ENCODE measurements at regions of chr1 and their contacts with region 1.

Region 1: DNA sequence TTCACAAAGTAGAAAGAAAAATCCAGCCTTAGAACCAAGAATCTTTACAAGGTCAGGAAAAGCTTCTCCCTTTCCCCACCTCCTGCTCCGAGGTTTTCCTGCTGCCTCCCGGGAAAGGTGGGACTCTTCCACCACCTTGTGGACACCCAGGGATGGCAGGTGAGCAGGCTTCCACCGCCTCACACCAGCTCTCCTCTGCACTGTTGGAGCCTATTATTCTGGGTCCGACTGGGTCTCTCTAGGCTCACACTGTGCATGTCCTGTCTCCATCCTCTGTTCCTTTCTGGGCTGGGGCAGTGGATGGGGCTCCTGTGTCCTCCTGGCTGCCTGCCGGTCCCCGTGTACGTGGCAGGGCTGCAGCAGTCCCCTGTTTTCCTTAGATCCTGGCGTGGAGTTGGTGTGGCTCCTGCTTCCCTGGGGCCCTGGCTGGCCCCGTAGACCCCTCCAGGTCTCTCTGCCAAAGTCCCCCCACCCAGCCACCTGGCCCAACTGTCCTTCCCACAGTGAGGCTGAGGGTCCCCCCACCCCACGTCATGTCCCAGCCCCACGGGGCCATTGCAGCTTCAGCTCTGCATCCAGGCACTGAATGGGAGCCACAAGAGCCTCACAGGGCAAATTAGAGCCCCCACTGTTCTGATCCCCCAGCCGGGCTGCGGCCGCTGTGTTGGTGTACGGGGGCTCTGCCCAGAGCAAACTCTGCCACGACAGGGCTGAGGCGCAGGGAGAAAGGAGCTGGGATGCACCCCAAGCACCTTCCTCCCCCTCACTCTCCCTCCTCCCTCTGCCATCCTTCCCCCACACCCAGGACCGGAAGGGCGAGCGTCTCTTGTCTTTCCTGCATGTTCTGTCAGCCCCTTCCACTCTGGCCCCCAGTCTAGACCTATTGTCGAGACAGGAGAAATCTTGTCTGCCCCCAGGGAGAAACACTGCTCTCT is 3.3 kb upstream of the SLC45A1 start:
- DNase-seq: peak; percentile 53 to 82
- H3K4me3 ChIP-seq: no peak overlapping the region
- H3K27ac ChIP-seq: peak overlapping the region; percentile 29; the same call in 1 of the 2 replicates
- H3K4me1 ChIP-seq: peaks cover 11% of the 10 kb centered on the region
- H3K27me3 ChIP-seq: no peaks in the 10 kb centered on the region
- CTCF ChIP-seq: peak; percentile 83

Region 2: DNA sequence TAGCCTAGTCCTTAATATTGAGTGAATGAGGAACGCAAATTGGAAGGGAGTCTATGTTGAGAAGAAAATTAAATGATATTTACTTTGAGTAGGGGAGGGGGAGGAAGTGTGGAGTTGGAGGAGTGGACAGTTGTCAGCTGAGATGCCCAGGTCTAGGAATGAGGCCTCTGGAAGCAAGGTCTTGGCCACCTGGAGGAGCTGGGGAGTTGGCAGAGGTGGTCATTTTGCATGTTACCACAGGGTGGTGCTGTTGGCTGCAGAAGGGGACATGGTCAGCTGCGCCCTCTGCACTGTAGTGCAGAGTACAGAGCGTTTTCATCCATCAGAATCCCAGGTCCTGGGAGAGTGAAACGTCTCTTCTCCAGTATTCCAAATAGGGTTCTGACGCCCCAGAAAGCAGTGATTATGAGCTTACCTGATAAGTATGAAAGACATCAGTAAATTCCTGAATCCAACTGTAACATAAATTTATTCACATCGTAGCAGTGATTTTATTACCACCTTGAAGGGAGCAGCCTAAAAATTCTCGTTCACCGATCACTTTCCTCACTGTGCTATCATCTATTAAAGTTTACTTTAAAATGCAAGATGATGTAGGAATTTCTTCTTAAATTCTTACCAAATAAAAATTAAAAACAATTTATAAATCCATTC is 339.3 kb before region 1 on chr1:
- CTCF ChIA-PET with region 1: interaction called, 14 read pairs
- POLR2A ChIA-PET with region 1: no interaction called
- intact Hi-C with region 1: loop called (anchors 2 kb)
- DNase-seq: peak; percentile 56 to 84
- H3K4me3 ChIP-seq: no peak overlapping the region
- H3K27ac ChIP-seq: no peak overlapping the region
- H3K4me1 ChIP-seq: no peaks in the 10 kb centered on the region; the same call in 1 of the 2 replicates
- H3K27me3 ChIP-seq: no peaks in the 10 kb centered on the region
- CTCF ChIP-seq: peak; percentile 84

Region 3: GRCh38 chr1:8026153-8026975 is 288.2 kb before region 1 on chr1 and contains the start of gene ERRFI1:
- CTCF ChIA-PET with region 1: interaction called, 4 read pairs
- POLR2A ChIA-PET with region 1: interaction called, 4 read pairs
- intact Hi-C with region 1: loop called (anchors 1 kb)
- DNase-seq: peak; percentile 74 to 95
- H3K4me3 ChIP-seq: peak within 1 kb of the TSS; percentile 91
- H3K27ac ChIP-seq: peak within 1 kb of the TSS; percentile 98
- H3K4me1 ChIP-seq: peaks cover 26% of the 10 kb centered on the region
- H3K27me3 ChIP-seq: no peaks in the 10 kb centered on the region
- CTCF ChIP-seq: no peak
- total RNA-seq, gene ERRFI1: 44.9 and 47.8 TPM in 2 replicates

Region 4: GRCh38 chr1:8097077-8097799 is 217.4 kb before region 1 on chr1:
- CTCF ChIA-PET with region 1: no interaction called
- POLR2A ChIA-PET with region 1: interaction called, 3 read pairs
- intact Hi-C with region 1: loop called (anchors 1 kb)
- DNase-seq: peak; percentile 50 to 98
- H3K4me3 ChIP-seq: peak overlapping the region; percentile 42; the same call in 1 of the 2 replicates
- H3K27ac ChIP-seq: peak overlapping the region; percentile 100
- H3K4me1 ChIP-seq: peaks cover 55% of the 10 kb centered on the region
- H3K27me3 ChIP-seq: no peaks in the 10 kb centered on the region
- CTCF ChIP-seq: no peak

Region 5: DNA sequence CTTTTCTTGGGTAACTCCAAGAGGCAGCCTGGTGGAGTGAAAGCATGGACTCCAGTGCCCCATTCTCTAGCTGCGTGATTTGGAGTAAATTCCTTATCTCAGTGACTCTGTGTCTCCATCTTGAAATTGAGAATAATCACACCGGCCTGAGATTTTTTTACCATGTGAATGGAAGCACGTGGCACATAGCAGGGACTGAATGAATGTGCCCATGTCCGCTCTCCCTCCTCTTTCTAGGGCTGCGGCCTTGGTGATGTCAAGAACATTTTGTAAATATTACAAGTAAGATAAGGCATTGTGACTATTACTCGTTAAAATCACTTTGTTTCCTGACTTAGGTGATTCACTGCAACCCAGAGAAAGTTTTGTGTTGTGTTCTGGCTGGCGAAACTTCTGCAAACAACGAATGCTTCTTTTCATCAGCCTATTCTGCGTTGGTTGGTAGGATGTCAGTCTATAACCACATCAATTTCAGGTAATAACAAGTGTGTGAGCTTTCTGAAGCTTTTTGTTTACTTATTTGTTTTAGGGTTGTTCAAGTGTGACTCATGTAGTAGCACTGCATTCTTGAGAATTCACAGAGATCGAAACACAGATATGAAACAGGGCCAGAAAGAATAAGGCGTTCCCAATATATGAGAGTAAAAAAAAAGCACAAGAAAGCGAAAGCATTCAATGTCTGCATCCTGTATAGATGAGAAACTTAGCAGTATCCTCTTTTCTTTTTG is 132.4 kb before region 1 on chr1:
- CTCF ChIA-PET with region 1: no interaction called
- POLR2A ChIA-PET with region 1: no interaction called
- intact Hi-C with region 1: loop called (anchors 5 kb)
- DNase-seq: peak; percentile 64 to 98
- H3K4me3 ChIP-seq: peak overlapping the region; percentile 28; the same call in 1 of the 2 replicates
- H3K27ac ChIP-seq: peak overlapping the region; percentile 100
- H3K4me1 ChIP-seq: peaks cover 40% of the 10 kb centered on the region
- H3K27me3 ChIP-seq: no peaks in the 10 kb centered on the region
- CTCF ChIP-seq: no peak

Region 6: DNA sequence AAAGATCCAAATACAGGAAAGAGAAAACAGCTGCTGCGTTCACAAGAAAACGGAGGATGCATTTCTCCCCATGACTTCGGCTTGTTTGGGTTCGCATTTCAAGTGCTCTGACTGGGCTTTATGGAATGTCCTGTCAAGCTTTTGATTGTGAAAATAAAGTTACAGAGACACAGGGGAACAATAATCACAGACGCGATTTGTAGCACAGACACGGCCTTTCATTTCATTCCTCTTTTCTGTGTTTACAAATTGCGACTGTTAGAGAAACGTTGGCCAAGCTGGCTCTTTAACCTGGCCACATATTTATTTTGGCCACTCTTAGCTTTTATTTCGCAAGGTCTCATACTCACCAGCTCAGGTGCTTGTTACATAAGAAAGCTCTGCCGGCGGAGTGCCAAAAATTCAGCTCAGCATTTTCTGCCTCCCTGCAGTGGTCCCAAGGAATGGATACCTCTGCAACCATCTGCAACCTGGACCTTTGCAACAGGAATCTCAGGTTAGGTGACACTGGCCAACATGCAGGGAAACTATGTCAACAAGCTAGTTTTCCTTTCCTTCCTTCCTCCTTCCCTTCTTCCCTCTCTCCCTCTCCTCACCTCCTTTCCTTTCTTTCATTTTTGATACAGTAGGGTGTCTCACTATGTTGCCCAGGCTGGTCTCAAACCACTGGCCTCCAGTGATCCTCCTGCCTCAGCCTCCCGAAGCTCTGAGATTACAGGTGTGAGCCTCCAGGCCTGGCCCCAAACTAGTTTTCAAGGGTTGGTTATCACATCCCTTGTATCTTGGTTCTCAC is 54.9 kb before region 1 on chr1:
- CTCF ChIA-PET with region 1: interaction called, 3 read pairs
- POLR2A ChIA-PET with region 1: no interaction called
- intact Hi-C with region 1: loop called (anchors 1 kb)
- DNase-seq: peak; percentile 80 to 82
- H3K4me3 ChIP-seq: peak overlapping the region; percentile 49; the same call in 1 of the 2 replicates
- H3K27ac ChIP-seq: peak overlapping the region; percentile 100
- H3K4me1 ChIP-seq: peaks cover 43% of the 10 kb centered on the region
- H3K27me3 ChIP-seq: no peaks in the 10 kb centered on the region
- CTCF ChIP-seq: no peak

Measured in PC-9 (cell line).